ENCODE measurements at regions of chr11 and their contacts with region 1.

Region 1: DNA sequence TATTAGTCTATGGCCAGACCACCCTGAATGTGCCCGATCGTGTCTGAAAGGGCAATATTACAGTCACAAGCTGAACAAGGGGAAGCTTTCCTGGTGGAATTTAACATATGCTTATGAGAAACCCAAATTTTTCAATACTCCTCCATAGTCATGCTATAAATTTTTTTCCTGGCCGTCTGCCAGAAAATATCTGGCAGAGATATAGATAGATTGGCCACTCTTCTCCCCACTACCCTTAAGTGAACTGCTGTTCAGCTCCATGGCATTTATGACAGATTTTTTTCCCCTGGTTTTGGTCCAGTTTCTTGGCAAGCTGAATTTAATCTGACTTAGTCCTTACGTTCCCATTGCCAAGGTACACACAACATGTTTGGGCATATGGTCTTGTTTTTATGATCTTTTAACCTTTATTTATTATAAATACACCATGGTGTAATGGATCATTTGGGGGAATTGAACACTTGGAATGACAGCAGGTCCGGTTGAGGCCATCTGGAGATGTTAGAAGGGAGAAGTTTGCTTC is 328.5 kb downstream of the CNTN5 start:
- DNase-seq: no peak
- ATAC-seq: no peak
- H3K4me3 ChIP-seq: no peak overlapping the region
- H3K27ac ChIP-seq: no peak overlapping the region
- H3K4me1 ChIP-seq: peaks cover 0 to 21% (median 0%) of the 10 kb centered on the region in 12 donors
- H3K27me3 ChIP-seq: no peaks in the 10 kb centered on the region
- CTCF ChIP-seq: no peak
- POLR2A ChIP-seq: no peak

Region 2: DNA sequence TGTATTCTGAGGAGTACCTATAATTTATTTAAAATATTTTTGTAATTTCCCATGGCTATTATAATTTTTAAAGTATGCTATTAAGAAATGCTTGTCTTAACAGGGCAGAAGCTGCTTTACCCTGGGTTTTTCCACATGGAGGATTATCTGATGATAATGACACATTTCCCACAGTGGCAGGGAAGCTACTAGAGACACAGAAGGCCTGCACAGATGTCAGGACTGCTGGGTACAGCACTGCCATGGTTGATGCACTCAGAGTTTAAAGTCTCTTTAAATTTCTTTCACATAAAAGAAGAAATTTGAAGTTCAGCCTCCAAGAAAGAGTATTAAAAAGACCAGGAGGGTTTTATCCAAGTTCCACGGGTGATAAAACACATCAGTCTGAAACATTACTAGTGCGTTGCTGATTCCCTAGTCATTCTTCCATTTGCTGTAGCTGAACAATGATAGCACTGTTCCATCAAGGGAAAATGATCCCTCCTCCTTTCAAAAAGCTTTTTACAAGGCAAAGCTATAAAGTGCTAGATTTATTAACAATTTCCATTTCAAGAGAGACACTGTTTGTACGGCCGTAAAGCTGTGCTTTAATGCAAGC is 34.5 kb after region 1 on chr11:
- intact Hi-C with region 1: loop called in 1 of 10 experiments (anchors 5 kb)
- DNase-seq: no peak
- ATAC-seq: no peak
- H3K4me3 ChIP-seq: no peak overlapping the region
- H3K27ac ChIP-seq: no peak overlapping the region
- H3K4me1 ChIP-seq: no peaks in the 10 kb centered on the region
- H3K27me3 ChIP-seq: no peaks in the 10 kb centered on the region
- CTCF ChIP-seq: no peak
- POLR2A ChIP-seq: no peak

Region 3: GRCh38 chr11:99406345-99406744 is 57.1 kb after region 1 on chr11:
- intact Hi-C with region 1: loop called in 1 of 10 experiments (anchors 10 kb)
- DNase-seq: no peak
- ATAC-seq: no peak
- H3K4me3 ChIP-seq: no peak overlapping the region
- H3K27ac ChIP-seq: no peak overlapping the region
- H3K4me1 ChIP-seq: peaks cover 0 to 3% (median 0%) of the 10 kb centered on the region in 12 donors
- H3K27me3 ChIP-seq: no peaks in the 10 kb centered on the region
- CTCF ChIP-seq: no peak
- POLR2A ChIP-seq: no peak

Measured in heart left ventricle (tissue), 16 donors.